WTC11 (cell line): ENCODE measurements at regions of chr1 and their contacts with region 1.

Region 1: DNA sequence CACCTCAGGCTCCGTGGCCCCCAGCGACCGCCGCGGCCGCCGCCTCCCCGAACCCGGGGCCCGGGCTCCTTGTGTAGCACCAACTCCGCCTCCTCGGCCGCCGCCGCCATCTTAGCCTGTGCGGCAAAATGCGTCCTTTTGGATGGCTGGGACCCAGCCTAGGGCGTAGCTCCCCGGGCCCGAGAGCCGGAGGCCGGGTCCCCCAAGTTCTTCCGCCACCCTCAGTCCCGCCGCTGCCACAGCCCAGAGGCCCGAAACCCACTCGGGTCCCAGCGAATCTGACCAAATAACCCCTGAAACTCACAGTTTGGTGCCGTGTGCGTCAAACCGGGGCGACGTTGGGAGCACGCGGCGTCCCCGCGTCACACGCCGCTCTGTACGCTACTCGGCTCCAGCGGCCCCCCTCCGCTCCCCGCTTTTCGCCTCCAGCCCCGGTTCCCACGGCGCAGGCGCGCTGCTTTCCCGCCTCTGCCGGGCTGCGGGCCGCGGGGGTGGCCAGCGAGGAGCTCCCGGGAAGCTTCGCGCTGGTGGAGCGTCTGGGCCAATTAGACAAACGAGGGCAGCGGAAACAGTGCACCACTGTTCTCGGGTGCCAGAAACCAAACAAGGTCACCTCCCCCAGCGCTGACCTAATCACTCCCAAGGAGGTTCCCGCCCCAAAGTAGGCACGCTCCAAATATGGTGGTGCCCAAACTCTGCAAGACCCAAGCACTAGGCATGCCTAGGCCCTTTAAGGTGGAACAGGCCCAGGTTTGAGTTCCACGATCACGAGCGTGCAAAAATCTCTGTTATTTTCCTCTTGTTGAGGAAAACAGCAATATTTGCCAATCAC is at the start of gene ZNF644:
- DNase-seq: peak; percentile 85
- ATAC-seq: peak; percentile 78
- H3K4me3 Mint-ChIP-seq: peak within 1 kb of the TSS; percentile 95
- H3K27ac Mint-ChIP-seq: peak within 1 kb of the TSS; percentile 99
- H3K4me1 Mint-ChIP-seq: peaks cover 43% of the 10 kb centered on the region
- H3K27me3 Mint-ChIP-seq: no peaks in the 10 kb centered on the region
- CTCF ChIP-seq: no peak
- total RNA-seq, gene ZNF644: 71.4 to 78.1 TPM (median 74.7 TPM) in 3 replicates

Region 2: GRCh38 chr1:91011726-91012125 is 10.2 kb before region 1 on chr1:
- CTCF ChIA-PET with region 1: interaction called, 3 read pairs
- POLR2A ChIA-PET with region 1: interaction called, 15 read pairs
- DNase-seq: no peak
- ATAC-seq: no peak
- H3K4me3 Mint-ChIP-seq: no peak overlapping the region
- H3K27ac Mint-ChIP-seq: no peak overlapping the region
- H3K4me1 Mint-ChIP-seq: peaks cover 80% of the 10 kb centered on the region
- H3K27me3 Mint-ChIP-seq: no peaks in the 10 kb centered on the region
- CTCF ChIP-seq: no peak

Region 3: DNA sequence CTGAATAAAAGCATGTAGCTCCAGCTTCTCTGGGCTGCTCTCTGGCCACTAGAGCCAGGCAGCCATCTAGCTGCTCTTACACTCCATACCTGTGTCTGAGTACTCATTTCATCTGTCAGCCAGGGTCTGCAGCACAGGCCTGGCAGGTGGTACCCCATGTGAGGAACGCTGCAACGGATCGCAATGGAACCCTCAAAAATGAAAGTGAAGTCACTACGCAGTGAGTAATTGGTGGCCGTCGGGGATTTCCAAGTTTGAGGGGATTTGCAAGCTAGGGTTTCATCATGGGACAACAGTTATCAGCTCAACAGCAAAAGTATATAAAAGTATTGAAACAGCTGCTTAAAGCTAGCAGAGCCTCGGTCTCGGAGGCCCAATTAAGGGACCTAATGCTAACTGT is 196.0 kb after region 1 on chr1:
- CTCF ChIA-PET with region 1: no interaction called
- POLR2A ChIA-PET with region 1: no interaction called
- DNase-seq: no peak
- ATAC-seq: no peak
- H3K4me3 Mint-ChIP-seq: no peak overlapping the region
- H3K27ac Mint-ChIP-seq: no peak overlapping the region
- H3K4me1 Mint-ChIP-seq: no peaks in the 10 kb centered on the region
- H3K27me3 Mint-ChIP-seq: no peaks in the 10 kb centered on the region
- CTCF ChIP-seq: no peak